Activated CD8-positive, alpha-beta T cell treated with anti-CD3 and anti-CD28 coated beads for 36 hours (primary cell): ENCODE measurements at regions of chr10 and their contacts with region 1.

Region 1: DNA sequence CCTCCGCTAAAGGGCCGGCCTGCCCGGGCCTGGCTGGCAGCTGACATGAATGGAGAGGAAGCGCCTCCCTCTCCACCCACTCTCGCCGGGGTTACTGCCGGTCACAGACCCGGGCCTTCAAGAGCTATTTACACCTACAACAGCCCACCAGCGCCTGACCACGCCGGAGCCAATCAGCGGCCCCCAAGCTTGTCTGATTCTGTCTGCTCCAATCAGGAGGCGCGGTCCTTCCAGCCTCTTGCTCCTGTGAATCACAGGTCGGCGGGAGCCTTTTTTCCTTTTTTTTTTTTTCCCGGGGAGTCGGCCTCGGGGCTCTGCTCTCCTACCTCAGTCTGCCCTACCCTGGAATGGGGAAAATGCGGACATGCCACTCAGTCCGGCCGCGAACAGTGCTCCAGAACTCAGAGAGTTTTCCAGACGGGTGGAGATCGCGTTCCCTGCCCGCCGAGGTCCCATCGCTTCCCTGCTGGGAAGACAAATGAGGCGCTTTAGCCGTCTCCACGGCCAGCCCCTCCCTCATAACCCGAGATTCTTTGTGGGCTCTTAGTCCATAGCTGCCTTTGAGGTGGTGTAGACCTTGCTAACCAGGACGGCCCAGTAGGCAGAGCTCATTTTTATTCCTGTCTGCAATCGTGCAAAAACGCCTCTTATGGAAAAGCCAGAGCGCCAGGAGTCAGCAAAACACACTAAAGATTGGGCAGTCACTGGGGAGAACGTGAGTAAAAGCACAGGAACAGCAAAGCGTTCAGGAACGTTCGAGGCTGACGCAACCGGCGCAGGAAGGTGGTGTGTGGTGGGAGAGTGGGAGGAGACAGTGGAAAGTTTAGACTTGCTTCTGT is 26.5 kb downstream of the SCD start:
- DNase-seq: peak; percentile 100
- ATAC-seq: peak; percentile 83
- H3K4me3 Mint-ChIP-seq: no peak overlapping the region
- H3K27ac Mint-ChIP-seq: no peak overlapping the region
- H3K4me1 Mint-ChIP-seq: peaks cover 39% of the 10 kb centered on the region
- H3K27me3 Mint-ChIP-seq: no peaks in the 10 kb centered on the region
- CTCF ChIP-seq: no peak

Region 2: DNA sequence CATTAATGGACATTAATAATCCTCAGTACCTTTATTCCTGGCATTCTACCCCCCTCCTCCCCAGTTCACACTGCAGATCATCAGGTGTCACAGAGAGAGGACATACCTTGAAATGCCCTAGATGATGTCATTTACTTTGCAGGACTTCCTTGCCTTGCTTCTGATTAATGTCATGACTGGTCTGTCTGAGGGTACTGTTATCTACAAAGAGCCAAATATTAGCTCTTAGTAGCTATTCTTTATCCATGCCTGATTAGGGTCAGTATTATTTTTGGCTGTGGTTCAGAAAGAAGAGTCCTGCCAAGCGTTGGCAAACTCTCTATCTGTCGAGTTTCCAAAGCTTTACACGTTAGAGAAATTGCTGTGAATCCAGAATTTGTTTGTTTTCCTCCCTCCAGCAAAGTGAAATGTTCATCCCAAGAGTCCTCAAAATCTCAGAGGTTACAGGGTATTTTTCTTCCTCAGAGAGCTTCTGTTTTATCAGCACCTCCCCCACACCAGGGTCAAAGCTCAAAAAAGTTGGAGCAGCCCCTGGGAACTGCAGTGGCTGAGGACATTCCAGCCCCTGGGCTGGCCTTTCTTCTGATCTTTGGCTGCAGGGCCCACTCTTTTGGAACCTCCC is 13.9 kb before region 1 on chr10:
- CTCF ChIA-PET with region 1: interaction called, 3 read pairs
- POLR2A ChIA-PET with region 1: interaction called, 14 read pairs
- intact Hi-C with region 1: no loop called
- DNase-seq: no peak
- ATAC-seq: no peak
- H3K4me3 Mint-ChIP-seq: no peak overlapping the region
- H3K27ac Mint-ChIP-seq: peak overlapping the region; percentile 2
- H3K4me1 Mint-ChIP-seq: peaks cover 33% of the 10 kb centered on the region
- H3K27me3 Mint-ChIP-seq: no peaks in the 10 kb centered on the region
- CTCF ChIP-seq: no peak

Region 3: GRCh38 chr10:100442530-100442929 is 69.0 kb after region 1 on chr10:
- CTCF ChIA-PET with region 1: no interaction called
- POLR2A ChIA-PET with region 1: no interaction called
- intact Hi-C with region 1: no loop called
- DNase-seq: no peak
- ATAC-seq: no peak
- H3K4me3 Mint-ChIP-seq: no peak overlapping the region
- H3K27ac Mint-ChIP-seq: no peak overlapping the region
- H3K4me1 Mint-ChIP-seq: no peaks in the 10 kb centered on the region
- H3K27me3 Mint-ChIP-seq: no peaks in the 10 kb centered on the region
- CTCF ChIP-seq: no peak